ENCODE measurements at regions of chr17 and their contacts with region 1.

Region 1: GRCh38 chr17:27622986-27623385 is 8.0 kb upstream of the LGALS9 start:
- DNase-seq: no peak
- H3K4me3 ChIP-seq: no peak overlapping the region
- H3K4me3 Mint-ChIP-seq: no peak overlapping the region
- H3K27ac Mint-ChIP-seq: no peak overlapping the region
- H3K4me1 ChIP-seq: no peaks in the 10 kb centered on the region
- H3K4me1 Mint-ChIP-seq: no peaks in the 10 kb centered on the region
- H3K27me3 ChIP-seq: no peaks in the 10 kb centered on the region
- H3K27me3 Mint-ChIP-seq: no peaks in the 10 kb centered on the region
- CTCF ChIP-seq: no peak

Region 2: DNA sequence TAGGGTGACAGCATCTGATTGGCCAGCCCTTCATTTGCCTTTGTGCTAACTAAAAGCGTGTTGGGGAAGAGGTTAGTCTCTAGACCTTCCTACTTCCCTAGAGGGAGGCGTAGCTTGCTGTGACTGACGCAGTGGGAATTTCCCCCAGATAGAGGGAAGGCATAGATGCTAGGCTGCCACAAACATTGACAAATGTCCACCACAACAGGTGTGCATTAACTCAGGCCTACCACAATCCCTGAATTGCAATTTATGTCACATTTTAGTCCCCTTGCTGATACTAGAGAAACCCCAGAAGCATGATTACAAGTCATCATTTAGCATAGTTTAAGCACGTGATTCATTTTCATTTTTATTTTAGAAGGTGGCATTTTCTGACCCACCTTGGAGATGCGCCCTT is 405.4 kb before region 1 on chr17:
- CTCF ChIA-PET with region 1: no interaction called
- POLR2A ChIA-PET with region 1: no interaction called
- intact Hi-C with region 1: loop called (anchors 10 kb)
- DNase-seq: no peak
- H3K4me3 ChIP-seq: no peak overlapping the region
- H3K4me3 Mint-ChIP-seq: no peak overlapping the region
- H3K27ac Mint-ChIP-seq: no peak overlapping the region
- H3K4me1 ChIP-seq: no peaks in the 10 kb centered on the region
- H3K4me1 Mint-ChIP-seq: no peaks in the 10 kb centered on the region
- H3K27me3 ChIP-seq: no peaks in the 10 kb centered on the region
- H3K27me3 Mint-ChIP-seq: peaks cover 3% of the 10 kb centered on the region
- CTCF ChIP-seq: no peak

Region 3: GRCh38 chr17:27353461-27354050 is 269.4 kb before region 1 on chr17:
- CTCF ChIA-PET with region 1: no interaction called
- POLR2A ChIA-PET with region 1: interaction called, 10 read pairs
- intact Hi-C with region 1: no loop called
- DNase-seq: peak; percentile 94 to 96
- H3K4me3 ChIP-seq: peak overlapping the region; percentile 93
- H3K4me3 Mint-ChIP-seq: peak overlapping the region; percentile 98
- H3K27ac Mint-ChIP-seq: peak overlapping the region; percentile 99
- H3K4me1 ChIP-seq: peaks cover 9% of the 10 kb centered on the region; the same call in 1 of the 2 replicates
- H3K4me1 Mint-ChIP-seq: no peaks in the 10 kb centered on the region
- H3K27me3 ChIP-seq: no peaks in the 10 kb centered on the region
- H3K27me3 Mint-ChIP-seq: no peaks in the 10 kb centered on the region
- CTCF ChIP-seq: peak; percentile 55 to 96

Region 4: DNA sequence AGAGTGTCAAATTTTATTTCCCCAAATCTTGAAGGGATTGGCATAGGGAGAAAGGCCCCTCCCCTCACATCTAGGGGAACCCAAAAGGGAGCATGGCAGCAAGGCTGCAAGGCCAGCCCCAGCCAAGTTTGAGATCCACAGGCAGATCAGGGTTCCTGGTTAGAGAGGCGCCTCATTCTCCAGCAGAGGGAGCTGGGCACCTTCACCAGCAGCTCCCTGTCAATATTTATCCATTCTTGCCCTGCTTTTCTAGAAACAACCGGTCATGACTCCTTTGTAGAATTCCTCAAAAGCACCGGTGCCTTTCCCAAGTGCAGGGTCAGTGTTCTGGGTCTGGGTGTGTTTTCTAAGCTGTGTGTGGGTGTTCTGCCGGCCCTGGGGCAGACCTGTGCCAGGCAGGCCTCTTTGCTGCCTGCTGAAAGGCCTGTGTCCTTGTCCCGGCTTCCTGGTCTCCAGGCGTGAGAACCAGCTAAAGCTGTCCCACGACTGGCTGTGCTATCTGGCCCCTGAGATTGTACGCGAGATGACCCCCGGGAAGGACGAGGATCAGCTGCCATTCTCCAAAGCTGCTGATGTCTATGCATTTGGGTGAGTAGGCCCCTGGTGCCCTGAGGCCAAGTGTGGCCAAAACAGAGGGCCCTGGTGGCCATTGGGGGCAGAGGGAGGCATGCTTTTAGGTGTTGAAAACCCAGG is 13.2 kb before region 1 on chr17:
- CTCF ChIA-PET with region 1: interaction called, 5 read pairs
- POLR2A ChIA-PET with region 1: no interaction called
- intact Hi-C with region 1: loop called (anchors 2 kb)
- DNase-seq: peak; percentile 75 to 79
- H3K4me3 ChIP-seq: no peak overlapping the region
- H3K4me3 Mint-ChIP-seq: no peak overlapping the region
- H3K27ac Mint-ChIP-seq: no peak overlapping the region
- H3K4me1 ChIP-seq: no peaks in the 10 kb centered on the region
- H3K4me1 Mint-ChIP-seq: no peaks in the 10 kb centered on the region
- H3K27me3 ChIP-seq: no peaks in the 10 kb centered on the region
- H3K27me3 Mint-ChIP-seq: no peaks in the 10 kb centered on the region
- CTCF ChIP-seq: peak; percentile 84 to 99